ENCODE measurements at regions of chr3 and their contacts with region 1.

Region 1: DNA sequence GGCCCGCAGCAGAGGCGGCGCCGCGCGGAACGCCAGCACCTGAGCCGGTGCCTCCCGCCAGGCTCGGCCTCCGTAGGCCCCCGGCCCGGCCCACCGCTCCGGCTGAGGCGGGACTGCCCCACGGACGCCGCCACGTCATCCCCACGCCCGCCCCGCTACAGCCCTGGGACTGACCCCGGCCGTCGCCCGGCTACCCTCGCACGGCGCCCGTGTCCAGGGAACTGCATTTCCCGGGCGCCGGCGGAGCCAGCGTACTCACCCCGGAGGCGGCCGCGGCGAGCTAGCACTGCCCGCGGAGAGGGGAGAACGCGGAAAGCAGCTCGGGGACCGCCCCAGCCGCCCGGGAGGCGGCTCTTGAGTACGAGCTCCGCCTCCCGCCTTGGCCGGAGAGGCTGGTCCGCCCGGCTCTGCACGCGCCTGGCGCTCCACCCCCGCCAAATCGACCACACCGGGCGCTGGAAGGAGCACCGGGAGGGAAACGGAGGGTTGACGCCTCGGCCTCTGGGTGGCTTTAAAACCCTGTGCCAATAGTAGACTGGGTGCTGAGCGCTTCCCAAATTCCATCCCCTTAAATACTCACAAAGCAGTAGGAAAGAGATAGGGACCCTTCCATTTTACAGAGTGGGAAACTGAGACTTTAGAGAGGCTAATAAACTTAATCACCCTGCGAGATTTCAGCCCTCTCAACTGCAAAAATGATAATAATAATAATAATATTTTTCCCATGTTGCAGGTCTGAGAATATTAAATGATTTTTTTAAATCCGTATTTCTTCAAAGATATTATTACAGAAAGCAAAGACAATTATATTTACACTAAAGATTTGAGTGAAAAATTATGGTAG is at the start of gene B4GALT4:
- DNase-seq: peak; percentile 75
- H3K4me3 Mint-ChIP-seq: peak within 1 kb of the TSS; percentile 87
- H3K27ac Mint-ChIP-seq: peak within 1 kb of the TSS; percentile 90
- H3K4me1 Mint-ChIP-seq: peaks cover 40% of the 10 kb centered on the region
- H3K27me3 Mint-ChIP-seq: no peaks in the 10 kb centered on the region
- total RNA-seq, gene B4GALT4: 14.1 and 18.6 TPM in 2 replicates

Region 2: GRCh38 chr3:119034256-119035013 is 206.4 kb before region 1 on chr3 and contains the start of gene IGSF11:
- intact Hi-C with region 1: loop called (anchors 2 kb)
- DNase-seq: peak; percentile 46
- H3K4me3 Mint-ChIP-seq: peak within 1 kb of the TSS; percentile 83
- H3K27ac Mint-ChIP-seq: no peak within 1 kb of the TSS
- H3K4me1 Mint-ChIP-seq: peaks cover 6% of the 10 kb centered on the region
- H3K27me3 Mint-ChIP-seq: peaks cover 54% of the 10 kb centered on the region
- total RNA-seq, gene IGSF11: 0.18 TPM in 1 of 2 replicates, not detected in the other

Region 3: DNA sequence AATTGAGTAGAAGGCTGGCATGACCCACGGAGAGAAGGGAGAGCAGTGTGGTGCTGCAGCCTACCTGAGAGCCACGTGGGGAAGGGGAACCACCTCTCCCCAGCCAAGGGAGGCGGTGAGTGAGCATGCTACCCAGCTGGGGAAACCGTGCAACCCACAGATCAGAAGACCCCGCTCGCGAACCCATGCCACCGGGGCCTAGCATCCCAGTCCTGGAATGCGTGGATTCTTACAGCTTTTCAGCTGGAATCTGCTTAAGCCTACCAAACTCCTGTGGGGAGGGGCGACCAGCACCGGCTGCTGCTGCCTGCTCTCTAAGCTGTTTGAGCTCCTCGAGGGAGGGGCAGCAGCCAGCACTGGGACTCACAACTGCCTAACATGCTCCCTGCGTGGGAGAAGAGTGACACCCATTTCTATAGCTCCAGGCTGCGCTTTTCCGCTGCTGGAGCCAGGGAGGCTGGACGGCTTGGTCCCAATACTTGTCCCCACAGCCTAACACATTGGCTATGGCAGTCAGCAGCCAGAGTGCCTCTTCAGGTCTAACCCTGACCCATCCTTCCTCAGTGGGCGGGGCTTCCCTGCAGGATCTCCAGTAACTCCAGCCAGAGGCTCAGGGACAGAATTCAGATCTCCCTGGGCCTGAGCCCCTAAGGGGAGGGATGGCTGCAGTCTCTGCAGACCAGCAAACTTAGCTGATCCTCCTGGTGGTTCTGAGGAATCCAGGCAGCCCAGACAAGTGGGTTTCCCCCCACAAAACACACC is 114.9 kb before region 1 on chr3:
- intact Hi-C with region 1: no loop called
- DNase-seq: no peak
- H3K4me3 Mint-ChIP-seq: no peak overlapping the region
- H3K27ac Mint-ChIP-seq: no peak overlapping the region
- H3K4me1 Mint-ChIP-seq: no peaks in the 10 kb centered on the region
- H3K27me3 Mint-ChIP-seq: peaks cover 2% of the 10 kb centered on the region

Region 4: GRCh38 chr3:119219069-119219468 is 21.7 kb before region 1 on chr3:
- intact Hi-C with region 1: loop called (anchors 1 kb)
- DNase-seq: peak; percentile 35
- H3K4me3 Mint-ChIP-seq: peak overlapping the region; percentile 37
- H3K27ac Mint-ChIP-seq: peak overlapping the region; percentile 73
- H3K4me1 Mint-ChIP-seq: peaks cover 26% of the 10 kb centered on the region
- H3K27me3 Mint-ChIP-seq: no peaks in the 10 kb centered on the region

Region 5: DNA sequence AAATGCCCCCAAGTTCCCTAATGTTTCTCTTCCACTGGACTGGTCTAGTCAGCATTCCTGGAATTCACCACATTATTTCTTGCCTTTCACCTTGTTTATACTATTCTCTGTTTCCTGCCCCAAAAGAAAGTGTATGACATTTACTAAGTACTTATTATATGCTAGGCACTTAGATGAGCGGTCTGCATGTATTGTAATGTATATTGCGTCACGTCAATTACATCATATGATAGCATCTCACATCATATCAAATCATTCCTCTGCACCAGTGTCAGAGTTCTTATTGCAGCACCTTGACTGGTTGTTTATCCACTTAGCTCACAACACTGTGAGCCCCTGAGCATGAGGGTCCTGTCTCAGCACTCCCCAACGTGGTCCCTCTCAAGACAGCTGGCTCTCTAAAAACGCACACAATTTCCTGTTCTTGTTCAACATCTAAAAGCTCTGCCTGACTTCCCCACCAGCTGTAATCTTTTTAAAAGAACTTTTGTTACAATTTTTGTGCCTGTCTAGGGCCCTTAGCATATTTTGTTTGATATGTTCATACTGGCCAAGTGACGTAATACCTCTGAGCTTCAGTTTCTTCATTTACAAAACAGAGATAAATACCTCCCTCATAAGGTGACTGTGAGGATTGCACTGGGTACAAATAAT is 112.2 kb after region 1 on chr3:
- intact Hi-C with region 1: loop called (anchors 1 kb)
- DNase-seq: no peak
- H3K4me3 Mint-ChIP-seq: no peak overlapping the region
- H3K27ac Mint-ChIP-seq: no peak overlapping the region
- H3K4me1 Mint-ChIP-seq: peaks cover 19% of the 10 kb centered on the region
- H3K27me3 Mint-ChIP-seq: peaks cover 28% of the 10 kb centered on the region

Region 6: GRCh38 chr3:119498186-119498987 is 257.6 kb after region 1 on chr3 and contains the start of gene TIMMDC1:
- intact Hi-C with region 1: loop called (anchors 5 kb)
- DNase-seq: peak; percentile 96
- H3K4me3 Mint-ChIP-seq: peak within 1 kb of the TSS; percentile 100
- H3K27ac Mint-ChIP-seq: peak within 1 kb of the TSS; percentile 99
- H3K4me1 Mint-ChIP-seq: peaks cover 33% of the 10 kb centered on the region
- H3K27me3 Mint-ChIP-seq: no peaks in the 10 kb centered on the region
- total RNA-seq, gene TIMMDC1: 124 and 126 TPM in 2 replicates